ENCODE measurements at regions of chr13 and their contacts with region 1.

Region 1: DNA sequence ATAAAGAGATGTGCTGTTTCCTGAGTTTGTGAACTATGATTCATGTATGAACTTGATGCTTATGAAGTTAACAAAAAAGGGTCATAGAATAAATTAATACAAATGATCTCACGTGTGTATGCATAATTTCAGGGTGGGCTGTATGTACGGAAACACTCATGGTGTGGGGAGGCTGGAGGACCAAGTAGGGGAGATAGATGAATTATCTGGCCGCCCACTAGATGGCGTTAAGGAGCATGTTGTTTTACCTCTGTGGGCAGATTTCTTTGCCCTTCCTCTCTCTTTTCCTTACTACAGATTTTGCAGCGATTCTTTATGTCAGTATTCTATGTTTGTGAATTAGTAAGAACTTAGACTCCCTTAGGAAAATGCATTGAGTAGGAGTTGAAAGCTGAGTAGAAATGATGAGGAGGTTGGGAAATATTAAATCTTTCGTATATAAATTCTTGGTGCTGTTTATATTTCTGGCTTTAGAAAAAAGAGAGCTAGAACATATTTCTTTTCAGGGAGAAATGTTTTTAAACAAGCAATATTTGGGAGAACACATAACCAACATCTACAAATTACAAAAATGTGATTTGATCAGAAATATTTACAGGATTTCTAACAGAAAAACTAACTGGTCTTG is 47.4 kb upstream of the TMTC4 start:
- DNase-seq: peak; percentile 17
- H3K4me3 Mint-ChIP-seq: no peak overlapping the region
- H3K27ac Mint-ChIP-seq: no peak overlapping the region
- H3K4me1 Mint-ChIP-seq: no peaks in the 10 kb centered on the region
- H3K27me3 Mint-ChIP-seq: peaks cover 5% of the 10 kb centered on the region

Region 2: DNA sequence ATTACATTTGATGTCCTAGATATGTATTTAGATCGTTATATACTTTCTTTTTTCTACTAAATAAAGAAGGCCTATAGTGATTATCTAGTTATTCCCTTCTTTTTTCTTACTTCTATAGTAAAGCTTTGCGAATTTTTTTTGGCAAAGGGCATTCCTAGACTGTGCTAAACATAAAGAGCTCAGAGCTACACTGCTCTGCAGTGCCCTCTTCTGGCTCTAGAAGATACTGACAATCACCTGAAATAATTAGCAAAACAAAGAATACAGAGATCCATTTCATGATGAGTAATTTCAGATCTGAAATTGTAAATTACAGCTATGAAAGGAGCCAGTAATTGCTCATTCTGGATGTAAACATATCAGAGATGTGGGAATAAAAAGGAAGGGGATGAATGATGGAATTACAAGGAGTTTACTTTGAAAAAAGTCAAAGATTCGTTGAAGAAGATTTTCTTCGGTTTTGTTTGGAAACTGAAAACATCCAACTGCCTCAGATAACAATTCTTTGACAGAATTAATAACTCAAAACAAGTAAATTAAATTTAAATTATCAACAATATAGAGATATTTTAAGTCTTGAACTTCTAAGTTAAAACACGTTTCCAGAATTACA is 405.8 kb after region 1 on chr13:
- intact Hi-C with region 1: loop called (anchors 2 kb)
- DNase-seq: no peak
- H3K4me3 Mint-ChIP-seq: no peak overlapping the region
- H3K27ac Mint-ChIP-seq: no peak overlapping the region
- H3K4me1 Mint-ChIP-seq: no peaks in the 10 kb centered on the region
- H3K27me3 Mint-ChIP-seq: no peaks in the 10 kb centered on the region